Psoas muscle (tissue), 8 donors: ENCODE measurements at regions of chr2 and their contacts with region 1.

Region 1: DNA sequence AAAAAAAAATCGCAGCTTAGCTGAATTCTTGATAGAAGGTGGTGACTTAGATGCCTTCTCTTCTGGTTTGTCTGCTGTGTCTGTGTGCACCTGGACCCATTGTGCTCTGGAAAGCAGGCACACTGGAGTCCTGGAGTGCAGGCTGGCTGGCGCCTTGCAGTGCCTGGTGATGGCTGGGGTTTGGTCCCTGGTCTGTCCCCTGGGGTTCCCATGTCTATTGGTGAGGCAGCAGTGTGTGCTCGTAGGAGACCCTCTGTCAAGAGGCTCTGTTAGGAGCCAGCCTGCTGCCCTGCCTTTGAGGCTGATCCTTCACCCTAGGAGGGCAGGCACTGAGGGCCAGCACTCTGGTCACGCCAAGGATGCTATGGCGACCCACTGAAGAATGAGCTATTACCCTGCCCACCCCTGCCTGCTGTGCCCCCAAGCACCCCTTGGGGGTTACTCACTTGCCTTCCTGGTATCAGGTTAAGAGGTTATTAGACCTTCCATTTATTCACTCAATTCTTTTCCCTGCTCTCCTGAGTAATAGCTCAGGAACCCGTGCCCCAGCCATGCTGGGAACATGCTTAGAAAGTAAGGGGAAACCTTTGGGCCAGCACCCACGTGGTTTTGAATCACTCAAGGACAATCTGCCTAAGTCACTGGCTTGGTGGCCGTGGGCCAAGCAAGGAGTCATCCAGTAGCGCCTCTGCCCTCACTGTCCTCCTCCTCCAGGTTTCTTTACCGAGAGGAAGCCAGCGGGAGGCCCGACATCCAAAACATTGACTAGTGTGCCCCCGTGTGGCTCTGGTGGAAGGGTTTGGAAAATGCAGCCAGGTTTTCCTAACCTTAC is 284.5 kb downstream of the PRKCE start:
- DNase-seq: peak; percentile 98
- ATAC-seq: peak; percentile 93 to 96 (median 94)
- H3K4me3 ChIP-seq: no peak overlapping the region
- H3K27ac ChIP-seq: peak overlapping the region; percentile 75
- H3K4me1 ChIP-seq: peaks cover 32% of the 10 kb centered on the region
- H3K27me3 ChIP-seq: no peaks in the 10 kb centered on the region
- CTCF ChIP-seq: peak; percentile 81

Region 2: DNA sequence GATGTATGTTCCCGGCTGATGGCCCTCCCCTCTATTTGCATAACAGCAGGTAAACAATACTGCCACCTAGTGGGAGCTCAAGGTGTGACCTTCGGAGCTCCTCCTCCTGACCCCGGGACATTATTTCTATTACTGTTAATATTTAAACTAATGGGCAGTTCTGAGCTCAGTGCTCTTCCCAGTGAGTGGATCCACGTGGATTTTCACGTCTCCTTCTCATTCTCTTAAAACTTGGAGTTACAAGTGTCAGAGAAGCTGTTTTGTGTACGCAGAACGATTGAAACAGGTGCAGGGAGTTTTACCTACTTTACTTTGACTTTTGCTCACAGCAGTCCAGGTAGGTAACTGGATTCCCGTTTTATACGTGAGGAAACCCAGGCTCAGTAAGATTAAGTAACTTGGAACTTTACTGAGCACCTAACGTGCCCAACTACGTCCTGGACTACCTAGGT is 157.3 kb before region 1 on chr2:
- intact Hi-C with region 1: loop called (anchors 2 to 5 kb)
- DNase-seq: peak; percentile 30 to 62
- ATAC-seq: peak; percentile 65 to 91 (median 80)
- H3K4me3 ChIP-seq: no peak overlapping the region
- H3K27ac ChIP-seq: no peak overlapping the region
- H3K4me1 ChIP-seq: peaks cover 6% of the 10 kb centered on the region
- H3K27me3 ChIP-seq: no peaks in the 10 kb centered on the region
- CTCF ChIP-seq: peak; percentile 84

Region 3: DNA sequence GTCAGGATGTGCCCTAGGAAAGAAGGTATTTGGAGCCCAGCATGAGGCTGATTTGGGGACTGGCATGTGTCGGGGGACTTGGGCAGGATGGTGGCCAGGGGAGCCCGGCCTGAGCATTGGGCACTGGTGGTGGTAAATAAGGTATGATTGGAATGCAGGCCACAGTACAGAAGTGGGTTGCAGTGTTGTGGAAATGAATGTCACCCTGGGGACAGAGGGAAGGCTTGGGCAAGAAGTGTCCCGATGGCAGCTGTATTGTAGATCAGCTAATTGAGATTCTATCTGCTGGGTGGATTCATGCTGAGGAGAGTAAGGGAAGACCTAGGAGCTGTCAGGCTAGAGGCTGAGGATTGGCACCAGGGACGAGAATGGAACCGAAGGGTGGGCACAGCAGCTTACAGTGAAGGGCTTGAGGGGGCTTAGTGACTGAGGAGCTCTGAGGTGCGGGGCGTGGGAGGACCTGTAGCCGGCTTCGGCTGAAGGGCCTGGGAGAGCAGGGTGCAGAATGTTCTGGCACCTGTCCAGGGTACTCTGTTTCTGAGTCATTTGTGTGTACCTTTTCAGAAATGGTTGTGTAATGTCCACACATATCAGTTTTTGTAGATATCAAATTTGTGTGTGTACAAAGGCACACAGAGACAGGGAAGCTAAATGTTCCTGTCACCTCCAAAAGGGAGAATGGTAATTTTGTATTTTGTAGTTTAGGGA is 114.3 kb before region 1 on chr2:
- intact Hi-C with region 1: loop called (anchors 2 to 5 kb)
- DNase-seq: peak; percentile 56 to 80
- ATAC-seq: peak; percentile 34 to 76 (median 68)
- H3K4me3 ChIP-seq: no peak overlapping the region
- H3K27ac ChIP-seq: peak overlapping the region; percentile 69
- H3K4me1 ChIP-seq: peaks cover 37% of the 10 kb centered on the region
- H3K27me3 ChIP-seq: no peaks in the 10 kb centered on the region
- CTCF ChIP-seq: no peak

Region 4: DNA sequence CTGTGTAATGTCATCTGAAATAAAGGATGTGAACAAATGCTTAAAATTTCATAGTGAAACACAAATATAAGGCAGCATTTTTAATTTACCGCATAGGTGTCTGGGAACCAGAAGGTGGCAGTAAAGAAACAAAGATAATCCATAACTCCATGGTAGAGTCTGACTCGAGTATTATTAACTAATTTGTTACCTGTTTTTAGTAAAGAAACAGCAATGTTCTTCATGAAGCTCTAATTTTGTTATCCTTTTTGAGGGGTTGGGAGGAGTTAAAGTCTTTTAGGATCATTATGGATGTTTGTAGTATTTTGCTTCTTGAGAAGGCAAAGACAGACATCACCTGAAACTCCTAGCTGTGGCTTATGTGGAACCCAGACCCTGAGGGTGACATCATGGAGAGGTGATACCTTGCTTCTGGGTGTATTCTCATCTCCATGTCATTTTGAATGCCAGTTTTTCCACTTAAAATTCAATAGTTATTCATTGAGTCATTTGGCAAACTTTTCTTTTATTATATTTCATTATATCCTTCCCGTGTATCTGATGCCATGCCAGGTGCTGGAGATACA is 75.0 kb after region 1 on chr2:
- intact Hi-C with region 1: no loop called
- DNase-seq: no peak
- ATAC-seq: peak in 1 of 4 donors; percentile 64
- H3K4me3 ChIP-seq: no peak overlapping the region
- H3K27ac ChIP-seq: no peak overlapping the region
- H3K4me1 ChIP-seq: no peaks in the 10 kb centered on the region
- H3K27me3 ChIP-seq: no peaks in the 10 kb centered on the region
- CTCF ChIP-seq: peak; percentile 65